Activated naive CD4-positive, alpha-beta T cell treated with anti-CD3 and anti-CD28 coated beads for 36 hours (primary cell): ENCODE measurements at regions of chr3 and their contacts with region 1.

Region 1: DNA sequence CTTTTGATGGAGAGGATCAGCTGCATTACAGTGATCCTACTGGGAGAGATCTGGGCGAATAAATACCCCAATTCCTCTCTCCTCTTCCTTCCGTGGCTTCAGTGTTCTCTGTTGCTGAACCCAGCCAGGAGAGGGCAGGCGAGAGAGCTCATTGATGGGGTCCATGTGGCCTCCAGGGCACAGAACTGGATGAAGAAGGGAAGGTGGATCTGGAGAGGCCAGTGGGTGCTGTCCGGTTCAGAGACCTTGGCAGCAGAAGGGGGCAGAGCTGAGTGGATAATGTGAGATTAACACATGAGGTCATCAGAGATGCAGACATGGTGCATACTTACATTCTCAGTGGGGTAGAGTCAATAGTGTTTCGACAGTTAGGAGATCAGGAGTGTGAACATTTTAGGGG is 193.6 kb downstream of the CLSTN2 start:
- DNase-seq: peak; percentile 30
- H3K4me3 Mint-ChIP-seq: no peak overlapping the region
- H3K27ac Mint-ChIP-seq: no peak overlapping the region
- H3K4me1 Mint-ChIP-seq: no peaks in the 10 kb centered on the region
- H3K27me3 Mint-ChIP-seq: no peaks in the 10 kb centered on the region

Region 2: GRCh38 chr3:140068494-140069017 is 60.1 kb before region 1 on chr3:
- CTCF ChIA-PET with region 1: no interaction called
- intact Hi-C with region 1: loop called (anchors 10 kb)
- DNase-seq: no peak
- H3K4me3 Mint-ChIP-seq: no peak overlapping the region
- H3K27ac Mint-ChIP-seq: no peak overlapping the region
- H3K4me1 Mint-ChIP-seq: no peaks in the 10 kb centered on the region
- H3K27me3 Mint-ChIP-seq: peaks cover 5% of the 10 kb centered on the region

Region 3: DNA sequence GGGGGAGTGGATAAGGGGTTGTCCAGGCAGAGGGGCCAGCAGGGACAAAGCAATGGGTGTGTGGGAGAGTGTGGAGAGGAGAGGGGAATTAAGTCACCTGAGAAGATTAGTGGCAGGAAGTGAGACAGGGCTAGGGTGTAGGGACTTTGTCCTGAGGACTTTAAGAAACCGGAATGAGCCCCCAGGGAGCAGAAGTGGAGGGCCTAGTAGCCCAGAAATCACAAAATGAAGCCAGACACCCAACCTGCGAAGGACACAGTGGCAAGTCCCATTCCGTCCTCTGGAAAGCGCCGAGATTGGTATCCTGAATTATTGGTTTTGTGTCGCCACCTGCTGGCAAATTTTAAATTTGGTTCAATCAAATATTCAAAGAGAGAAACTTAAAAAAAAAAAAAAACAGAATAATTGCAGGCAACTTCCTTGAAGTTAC is 735.0 kb after region 1 on chr3:
- CTCF ChIA-PET with region 1: no interaction called
- intact Hi-C with region 1: loop called (anchors 2 kb)
- DNase-seq: peak; percentile 73
- H3K4me3 Mint-ChIP-seq: no peak overlapping the region
- H3K27ac Mint-ChIP-seq: no peak overlapping the region
- H3K4me1 Mint-ChIP-seq: no peaks in the 10 kb centered on the region
- H3K27me3 Mint-ChIP-seq: peaks cover 2% of the 10 kb centered on the region

Region 4: GRCh38 chr3:140910860-140911259 is 782.2 kb after region 1 on chr3:
- CTCF ChIA-PET with region 1: no interaction called
- intact Hi-C with region 1: no loop called
- DNase-seq: no peak
- H3K4me3 Mint-ChIP-seq: no peak overlapping the region
- H3K27ac Mint-ChIP-seq: no peak overlapping the region
- H3K4me1 Mint-ChIP-seq: no peaks in the 10 kb centered on the region
- H3K27me3 Mint-ChIP-seq: peaks cover 4% of the 10 kb centered on the region